ENCODE measurements at regions of chr18 and their contacts with region 1.

Region 1: DNA sequence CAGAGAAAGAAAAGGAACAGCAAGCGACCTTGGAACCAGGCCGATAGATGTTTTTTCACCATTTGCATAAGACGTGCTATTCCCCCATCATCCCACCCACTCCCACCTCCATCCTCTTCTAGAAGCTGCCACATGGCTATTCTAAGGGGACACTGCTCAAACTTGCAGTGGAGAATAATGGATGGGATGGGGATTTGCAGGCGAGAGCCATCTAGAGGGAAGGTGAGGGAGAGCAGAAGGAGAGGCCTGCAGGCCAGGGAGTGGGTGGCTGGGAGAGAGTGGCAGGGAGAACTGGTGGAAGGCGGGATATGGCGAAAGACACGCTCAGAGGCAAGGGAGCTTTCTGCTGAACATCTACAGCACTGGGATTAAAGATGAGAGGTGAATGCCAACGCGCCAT is 84.9 kb downstream of the MAPK4 start:
- DNase-seq: no peak
- H3K4me3 ChIP-seq: no peak overlapping the region
- H3K27ac ChIP-seq: no peak overlapping the region
- H3K4me1 ChIP-seq: no peaks in the 10 kb centered on the region
- H3K27me3 ChIP-seq: no peaks in the 10 kb centered on the region
- CTCF ChIP-seq: no peak
- POLR2A ChIP-seq: no peak

Region 2: DNA sequence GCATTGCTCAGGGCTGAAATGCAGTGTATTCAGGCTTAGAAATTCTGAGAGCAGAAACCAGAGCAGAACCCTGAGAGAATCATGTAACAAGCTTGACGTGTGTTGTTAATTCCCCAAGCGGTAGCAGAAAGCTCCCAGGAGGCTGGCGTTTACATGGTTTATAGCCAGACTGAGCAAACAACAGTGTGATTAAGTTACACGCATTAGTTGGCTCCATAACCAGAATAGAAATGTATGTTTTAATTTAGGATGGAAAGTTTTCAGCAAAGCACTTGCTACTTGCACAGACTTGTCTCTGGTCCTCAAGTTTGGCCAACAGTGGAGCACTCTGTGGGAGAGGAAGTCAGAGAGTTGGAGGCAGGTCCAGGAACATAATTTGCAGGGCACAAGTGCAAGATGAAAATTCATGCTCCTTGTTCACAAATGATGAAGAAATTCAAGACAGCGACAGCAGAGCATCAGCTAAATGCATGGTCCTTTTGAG is 15.6 kb before region 1 on chr18:
- CTCF ChIA-PET with region 1: no interaction called
- POLR2A ChIA-PET with region 1: no interaction called
- dilution Hi-C with region 1: no loop called
- intact Hi-C with region 1: no loop called
- DNase-seq: no peak
- H3K4me3 ChIP-seq: no peak overlapping the region
- H3K27ac ChIP-seq: no peak overlapping the region
- H3K4me1 ChIP-seq: no peaks in the 10 kb centered on the region
- H3K27me3 ChIP-seq: no peaks in the 10 kb centered on the region
- CTCF ChIP-seq: no peak
- POLR2A ChIP-seq: no peak

Region 3: DNA sequence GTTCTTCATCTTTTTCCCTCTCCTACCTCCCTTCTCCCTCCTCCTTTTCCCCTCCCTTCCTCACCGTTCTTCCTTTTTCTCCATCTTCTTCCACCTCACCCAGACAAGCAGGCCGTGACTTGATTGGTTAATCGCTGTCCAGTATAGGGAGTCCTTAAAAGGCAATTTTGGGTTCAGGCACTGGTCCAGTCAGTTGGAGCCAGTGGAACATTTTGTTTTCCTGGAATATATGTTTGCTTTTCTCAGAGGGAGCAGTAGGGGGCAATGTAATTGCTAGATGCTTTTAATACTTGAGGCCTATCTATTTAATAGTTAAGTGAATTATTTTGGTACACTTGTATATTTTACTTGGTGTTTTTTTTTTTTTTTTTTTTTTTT is 338.0 kb after region 1 on chr18:
- CTCF ChIA-PET with region 1: no interaction called
- POLR2A ChIA-PET with region 1: interaction called, 12 read pairs
- dilution Hi-C with region 1: no loop called
- intact Hi-C with region 1: no loop called
- DNase-seq: no peak
- H3K4me3 ChIP-seq: no peak overlapping the region
- H3K27ac ChIP-seq: no peak overlapping the region
- H3K4me1 ChIP-seq: no peaks in the 10 kb centered on the region
- H3K27me3 ChIP-seq: no peaks in the 10 kb centered on the region
- CTCF ChIP-seq: no peak
- POLR2A ChIP-seq: no peak

Measured in endothelial cell of umbilical vein (primary cell).